Activated CD4-positive, alpha-beta T cell treated with anti-CD3 and anti-CD28 coated beads, Interleukin-2, amount 10 ng/mL, durations not matched to agents 24 days and 14 days (primary cell): ENCODE measurements at regions of chr3 and their contacts with region 1.

Region 1: DNA sequence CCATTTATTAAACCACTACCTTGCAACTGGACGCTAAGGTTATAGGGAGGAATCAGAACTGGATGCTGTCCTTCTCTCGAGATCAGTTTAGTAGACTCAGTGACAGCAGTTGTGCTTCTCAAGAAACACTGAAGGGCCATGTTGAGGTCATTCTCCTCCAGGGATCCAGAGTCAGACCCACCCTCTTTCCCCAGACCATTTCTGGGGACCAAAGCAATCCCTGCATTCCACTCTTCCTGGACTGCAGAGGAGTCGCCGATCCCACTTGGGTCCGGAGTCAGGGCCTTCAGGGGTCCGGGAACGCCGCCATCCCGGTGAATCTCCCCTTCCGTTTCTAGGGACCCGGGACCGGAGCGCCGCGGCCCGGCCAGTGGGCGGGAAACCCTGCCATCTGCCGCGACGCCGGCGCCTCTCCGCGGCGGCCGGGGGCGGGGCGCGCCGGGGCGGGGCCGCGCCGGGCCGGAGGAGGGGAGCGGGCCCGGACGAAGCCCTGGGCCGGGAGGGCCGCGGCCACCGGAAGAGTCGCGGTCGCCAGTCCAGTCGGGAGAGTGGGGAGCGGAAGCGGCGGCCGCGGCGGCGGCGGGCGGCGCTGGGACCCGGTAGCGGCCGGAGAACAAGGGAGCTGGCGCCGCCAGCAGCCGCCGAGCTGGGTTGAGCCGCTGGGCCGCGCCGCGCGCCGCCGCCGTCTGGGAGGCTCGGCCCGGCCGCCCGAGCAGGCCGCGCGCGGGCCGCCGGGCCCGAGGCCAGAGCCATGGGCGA is at the start of gene DVL3:
- DNase-seq: peak; percentile 88
- H3K4me3 Mint-ChIP-seq: peak within 1 kb of the TSS; percentile 95
- H3K27ac Mint-ChIP-seq: peak within 1 kb of the TSS; percentile 78
- H3K4me1 Mint-ChIP-seq: peaks cover 14% of the 10 kb centered on the region
- H3K27me3 Mint-ChIP-seq: no peaks in the 10 kb centered on the region
- total RNA-seq, gene DVL3: 49.0 and 54.5 TPM in 2 replicates

Region 2: DNA sequence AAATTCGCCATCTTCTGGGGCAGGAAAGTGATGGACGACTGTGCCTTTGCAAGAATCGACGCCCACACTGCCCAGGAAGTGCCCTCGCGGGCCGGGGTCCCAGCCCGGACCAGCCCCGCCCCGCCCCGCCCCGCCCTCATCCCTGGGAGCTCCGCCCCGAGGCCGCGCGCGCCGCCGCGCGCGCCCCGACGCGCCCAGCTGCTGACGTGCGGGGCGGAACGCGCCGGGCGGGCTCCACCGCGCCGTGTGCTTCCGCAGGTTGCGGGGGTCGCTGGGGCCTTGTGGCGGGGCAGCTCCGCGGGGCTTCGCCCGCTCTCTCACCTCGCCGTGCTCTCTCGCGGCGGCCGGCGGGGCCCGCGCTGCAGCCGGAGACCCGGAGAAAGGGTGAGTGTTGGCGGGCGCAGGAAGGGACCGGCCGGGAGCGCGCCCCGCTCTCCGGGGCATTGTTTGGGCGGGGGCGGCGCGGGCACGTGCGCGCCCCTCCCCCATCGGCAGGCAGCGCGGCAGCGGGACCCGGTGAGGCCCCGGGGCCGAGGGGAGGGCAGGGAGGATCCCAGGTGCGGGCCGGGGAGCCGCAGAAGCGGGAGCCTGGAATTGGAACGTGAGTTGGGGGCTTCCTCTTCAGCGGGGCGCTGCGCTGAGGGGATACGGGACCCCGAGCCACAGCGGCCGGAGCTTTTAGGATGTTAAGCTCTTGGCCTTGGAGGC is 457.3 kb before region 1 on chr3 and contains the start of gene YEATS2:
- intact Hi-C with region 1: loop called (anchors 5 kb)
- DNase-seq: peak; percentile 91
- H3K4me3 Mint-ChIP-seq: peak within 1 kb of the TSS; percentile 92
- H3K27ac Mint-ChIP-seq: peak within 1 kb of the TSS; percentile 85
- H3K4me1 Mint-ChIP-seq: peaks cover 31% of the 10 kb centered on the region
- H3K27me3 Mint-ChIP-seq: no peaks in the 10 kb centered on the region
- total RNA-seq, gene YEATS2: 58.4 and 62.2 TPM in 2 replicates

Region 3: GRCh38 chr3:184143327-184143726 is 11.7 kb before region 1 on chr3:
- intact Hi-C with region 1: no loop called
- DNase-seq: no peak
- H3K4me3 Mint-ChIP-seq: no peak overlapping the region
- H3K27ac Mint-ChIP-seq: peak overlapping the region; percentile 37
- H3K4me1 Mint-ChIP-seq: peaks cover 2% of the 10 kb centered on the region
- H3K27me3 Mint-ChIP-seq: no peaks in the 10 kb centered on the region

Region 4: DNA sequence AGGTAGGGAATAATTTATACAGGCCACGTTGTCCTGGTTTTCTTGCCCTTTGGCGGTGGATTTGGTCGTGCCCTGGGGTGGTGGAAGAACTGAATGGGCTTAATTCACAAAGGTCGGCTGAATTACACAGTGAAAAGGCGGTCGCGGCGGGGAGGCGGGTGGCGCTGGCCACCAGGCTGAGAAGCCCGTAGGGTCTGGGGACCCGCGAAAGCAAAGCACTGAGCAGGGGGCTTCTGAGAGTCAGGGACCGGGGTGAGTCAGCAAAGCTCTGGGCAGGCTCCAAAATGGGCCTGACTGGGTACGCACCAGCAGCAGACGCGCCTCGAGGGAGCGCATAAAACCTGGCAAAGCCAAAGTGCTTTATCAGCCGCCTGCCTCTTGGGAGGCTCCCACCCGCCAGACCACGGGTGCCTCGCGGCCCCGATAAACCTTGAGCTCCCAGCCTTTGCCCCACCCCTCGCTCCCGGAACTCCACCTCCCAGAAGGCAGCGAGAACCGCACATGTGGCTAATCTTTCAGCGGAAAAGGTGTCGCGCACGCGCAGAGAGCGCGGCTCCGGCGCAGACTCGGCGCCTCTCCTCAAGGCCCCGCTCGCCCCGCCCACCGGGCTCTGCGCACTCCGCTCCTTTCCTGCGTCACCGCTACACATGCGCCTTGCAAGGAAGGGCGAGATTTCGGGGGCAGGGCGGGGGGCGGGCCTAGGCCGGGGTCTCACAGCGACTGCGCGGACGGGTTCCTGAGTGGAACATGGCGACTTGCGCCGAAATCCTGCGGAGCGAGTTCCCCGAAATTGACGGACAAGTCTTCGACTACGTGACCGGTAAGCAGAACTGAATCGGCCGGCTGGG is 30.6 kb after region 1 on chr3 and contains the start of gene ABCF3:
- intact Hi-C with region 1: loop called (anchors 1 kb)
- DNase-seq: peak; percentile 100
- H3K4me3 Mint-ChIP-seq: peak within 1 kb of the TSS; percentile 92
- H3K27ac Mint-ChIP-seq: peak within 1 kb of the TSS; percentile 92
- H3K4me1 Mint-ChIP-seq: peaks cover 28% of the 10 kb centered on the region
- H3K27me3 Mint-ChIP-seq: no peaks in the 10 kb centered on the region
- total RNA-seq, gene ABCF3: 66.9 and 67.6 TPM in 2 replicates

Region 5: GRCh38 chr3:184611607-184612281 is 456.7 kb after region 1 on chr3:
- intact Hi-C with region 1: no loop called
- DNase-seq: no peak
- H3K4me3 Mint-ChIP-seq: no peak overlapping the region
- H3K27ac Mint-ChIP-seq: no peak overlapping the region
- H3K4me1 Mint-ChIP-seq: no peaks in the 10 kb centered on the region
- H3K27me3 Mint-ChIP-seq: peaks cover 28% of the 10 kb centered on the region